GM12878 (cell line): ENCODE measurements at regions of chr14 and their contacts with region 1.

Region 1: DNA sequence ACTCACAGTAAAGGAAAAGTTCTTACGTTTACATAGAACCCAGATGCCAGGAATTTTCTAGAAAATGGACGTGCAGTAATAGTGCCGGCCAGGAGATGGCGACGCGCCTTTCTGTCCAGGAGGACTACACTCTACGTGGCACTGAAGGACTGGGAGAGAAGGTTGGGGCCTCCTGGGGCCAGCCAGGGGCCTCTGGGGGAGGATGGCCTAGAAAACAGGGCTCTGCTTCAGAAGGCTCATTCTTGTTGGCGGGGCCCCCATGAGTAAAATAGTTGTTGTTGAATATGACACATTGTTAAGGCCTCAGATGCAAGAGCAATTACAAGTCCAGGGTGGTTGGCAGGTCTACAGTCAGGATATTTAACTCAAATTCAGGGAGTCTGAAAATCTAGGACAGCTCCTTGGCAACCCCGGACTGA is 120.1 kb upstream of the MAX start:
- DNase-seq: no peak
- ATAC-seq: peak; percentile 86
- H3K4me3 ChIP-seq: no peak overlapping the region
- H3K27ac ChIP-seq: peak overlapping the region; percentile 20; the same call in 1 of the 2 replicates
- H3K4me1 ChIP-seq: peaks cover 31% of the 10 kb centered on the region
- H3K27me3 ChIP-seq: no peaks in the 10 kb centered on the region
- CTCF ChIP-seq: peak; percentile 84 to 91 (median 84)
- EP300 ChIP-seq: no peak
- POLR2A ChIP-seq: no peak
- RAD21 ChIP-seq: peak; percentile 95

Region 2: DNA sequence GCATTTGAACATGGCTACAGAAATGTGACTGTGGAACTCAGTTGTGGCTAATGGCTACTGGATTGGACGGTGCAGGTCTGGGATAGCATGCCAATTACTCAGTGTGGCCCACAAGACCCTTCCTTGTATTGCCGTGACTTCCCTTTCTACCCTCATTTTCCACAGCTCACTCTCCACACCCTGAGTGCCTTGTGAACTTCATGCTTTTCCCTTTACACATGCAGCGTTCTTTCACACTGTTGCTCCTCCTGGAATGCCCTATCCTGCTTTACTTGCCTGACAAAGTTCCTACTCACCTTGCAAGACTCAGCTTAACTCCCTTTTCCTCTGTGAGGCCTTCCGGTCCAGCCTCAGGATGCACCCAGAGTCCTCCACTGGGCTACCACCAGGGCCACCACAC is 73.3 kb before region 1 on chr14:
- CTCF ChIA-PET with region 1: no interaction called
- POLR2A ChIA-PET with region 1: no interaction called
- RAD21 ChIA-PET with region 1: no interaction called
- SMC1A ChIA-PET with region 1: no interaction called
- in situ Hi-C with region 1: no loop called
- intact Hi-C with region 1: no loop called
- DNase-seq: no peak
- ATAC-seq: no peak
- H3K4me3 ChIP-seq: no peak overlapping the region
- H3K27ac ChIP-seq: no peak overlapping the region
- H3K4me1 ChIP-seq: no peaks in the 10 kb centered on the region
- H3K27me3 ChIP-seq: no peaks in the 10 kb centered on the region
- CTCF ChIP-seq: no peak
- EP300 ChIP-seq: no peak
- POLR2A ChIP-seq: no peak
- RAD21 ChIP-seq: no peak

Region 3: GRCh38 chr14:65604936-65605335 is 382.5 kb after region 1 on chr14:
- CTCF ChIA-PET with region 1: no interaction called
- POLR2A ChIA-PET with region 1: no interaction called
- RAD21 ChIA-PET with region 1: no interaction called
- SMC1A ChIA-PET with region 1: no interaction called
- in situ Hi-C with region 1: no loop called
- intact Hi-C with region 1: loop called (anchors 10 kb)
- DNase-seq: no peak
- ATAC-seq: no peak
- H3K4me3 ChIP-seq: no peak overlapping the region
- H3K27ac ChIP-seq: no peak overlapping the region
- H3K4me1 ChIP-seq: no peaks in the 10 kb centered on the region
- H3K27me3 ChIP-seq: no peaks in the 10 kb centered on the region
- CTCF ChIP-seq: peak in 2 of 3 experiments; percentile 21 to 56; a peak in 2 of 6 replicates
- EP300 ChIP-seq: no peak
- POLR2A ChIP-seq: no peak
- RAD21 ChIP-seq: no peak